Right ventricle myocardium inferior (tissue), 1 donor: ENCODE measurements at regions of chr7 and their contacts with region 1.

Region 1: DNA sequence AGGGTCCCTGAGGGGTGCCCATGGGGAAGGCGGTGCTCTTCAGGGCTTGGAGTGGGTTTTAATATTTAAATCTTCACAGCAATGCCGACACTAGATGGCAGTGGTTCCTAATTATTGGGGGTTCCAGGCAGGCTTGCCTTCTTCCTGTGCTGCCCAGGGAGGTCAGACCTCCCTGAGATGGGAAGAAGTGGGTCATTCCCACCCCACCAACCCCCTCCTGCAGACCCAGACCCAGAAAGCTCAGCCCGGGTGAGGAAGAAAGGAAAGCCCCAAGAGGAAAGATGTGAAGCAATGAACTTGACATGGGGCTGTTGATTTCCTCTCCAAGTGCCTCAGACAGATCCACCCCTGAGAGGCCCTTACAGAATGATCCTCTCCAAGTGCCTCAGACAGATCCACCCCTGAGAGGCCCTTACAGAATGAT is 85.1 kb upstream of the LANCL2 start:
- DNase-seq: no peak
- ATAC-seq: peak; percentile 67

Region 2: DNA sequence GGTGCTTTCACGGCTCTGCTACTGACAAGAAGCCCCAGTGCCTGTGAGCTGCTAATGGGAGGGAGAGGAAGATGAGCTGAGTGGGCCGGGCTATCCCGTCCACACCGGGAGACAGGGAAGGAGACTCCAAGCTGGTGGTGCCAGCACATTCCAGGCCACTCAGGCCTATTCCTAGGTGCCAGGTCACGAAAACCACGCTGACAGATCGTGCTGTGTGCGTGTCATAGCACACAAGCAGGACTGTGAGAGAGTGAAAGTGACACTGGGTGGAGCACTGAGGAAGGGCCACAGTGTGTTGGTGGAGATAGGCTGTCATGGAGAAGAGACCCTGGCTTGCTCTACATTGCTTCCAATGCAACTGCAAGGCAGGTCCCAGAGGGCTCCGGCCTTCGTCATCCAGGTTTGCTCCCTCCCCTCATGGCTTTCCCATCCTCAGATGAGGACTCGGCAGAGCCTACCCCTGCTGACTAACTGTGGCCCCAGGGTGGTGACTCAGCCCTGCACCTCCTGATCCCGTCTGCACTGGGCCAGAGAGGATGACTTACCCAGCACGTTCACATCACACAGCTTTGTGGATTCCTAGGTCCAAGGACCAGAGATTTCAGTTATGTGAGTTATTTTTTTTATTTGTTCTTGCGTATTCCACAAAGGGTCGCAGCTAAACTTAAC is 94.0 kb before region 1 on chr7:
- intact Hi-C with region 1: no loop called
- DNase-seq: no peak
- ATAC-seq: no peak

Region 3: GRCh38 chr7:55235115-55235514 is 44.9 kb before region 1 on chr7:
- intact Hi-C with region 1: no loop called
- DNase-seq: no peak
- ATAC-seq: no peak

Region 4: DNA sequence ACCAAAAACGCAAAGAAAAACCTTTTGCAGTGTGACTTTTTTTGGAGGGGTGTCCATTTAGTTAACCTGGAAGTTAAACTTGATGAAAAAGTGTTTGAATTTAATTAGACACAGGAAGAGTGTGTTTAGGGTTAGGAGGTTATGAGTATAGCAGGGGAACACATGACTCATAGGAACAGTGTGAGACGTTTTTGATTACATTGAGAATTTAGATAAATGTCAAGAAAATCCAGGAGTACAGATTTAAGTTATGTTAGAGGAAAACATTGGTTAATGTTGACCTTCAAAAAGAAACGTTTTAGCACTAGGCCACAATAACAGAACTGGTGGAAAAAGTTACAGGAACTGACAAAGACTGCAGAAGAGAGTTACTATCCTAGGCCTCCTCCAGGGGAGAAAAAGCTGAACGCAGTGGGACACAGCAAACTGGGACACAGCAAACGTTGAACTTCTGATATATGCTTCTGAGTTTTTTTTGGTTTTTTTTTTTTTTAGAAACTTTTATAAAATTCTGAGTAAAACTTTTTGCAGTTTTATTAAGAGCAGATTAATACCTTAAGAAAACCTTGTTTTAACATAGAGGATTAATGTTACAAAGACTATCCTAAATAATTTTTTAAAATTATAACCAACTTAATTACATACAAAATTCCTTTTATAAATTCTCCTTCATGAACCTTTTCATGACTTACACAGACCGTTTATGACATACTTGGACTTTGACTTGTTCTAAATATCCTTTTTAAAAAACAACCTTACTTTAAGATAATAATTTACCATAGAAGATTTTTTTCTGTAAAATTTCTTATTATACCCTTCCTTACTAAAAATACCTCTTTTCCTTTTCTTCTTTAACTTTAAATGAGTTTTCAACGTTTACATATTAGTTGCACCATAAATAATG is 107.3 kb after region 1 on chr7:
- intact Hi-C with region 1: no loop called
- DNase-seq: no peak
- ATAC-seq: no peak

Region 5: GRCh38 chr7:55415173-55415778 is 135.2 kb after region 1 on chr7:
- intact Hi-C with region 1: loop called (anchors 1 kb)
- DNase-seq: peak; percentile 86
- ATAC-seq: peak; percentile 76

Region 6: GRCh38 chr7:55593515-55594318 is 313.7 kb after region 1 on chr7:
- intact Hi-C with region 1: loop called (anchors 5 kb)
- DNase-seq: peak; percentile 87
- ATAC-seq: peak; percentile 59